HEK293 (cell line): ENCODE measurements at regions of chr6 and their contacts with region 1.

Region 1: GRCh38 chr6:30102970-30103874 is 9.7 kb downstream of the TRIM31 start:
- H3K4me3 ChIP-seq: peak overlapping the region; percentile 32
- H3K27ac ChIP-seq: no peak overlapping the region
- H3K4me1 ChIP-seq: peaks cover 12% of the 10 kb centered on the region
- CTCF ChIP-seq: peak; percentile 96

Region 2: GRCh38 chr6:29953001-29953441 is 150.2 kb before region 1 on chr6:
- CTCF ChIA-PET with region 1: no interaction called
- POLR2A ChIA-PET with region 1: no interaction called
- H3K4me3 ChIP-seq: no peak overlapping the region
- H3K27ac ChIP-seq: no peak overlapping the region
- H3K4me1 ChIP-seq: no peaks in the 10 kb centered on the region
- CTCF ChIP-seq: no peak

Region 3: DNA sequence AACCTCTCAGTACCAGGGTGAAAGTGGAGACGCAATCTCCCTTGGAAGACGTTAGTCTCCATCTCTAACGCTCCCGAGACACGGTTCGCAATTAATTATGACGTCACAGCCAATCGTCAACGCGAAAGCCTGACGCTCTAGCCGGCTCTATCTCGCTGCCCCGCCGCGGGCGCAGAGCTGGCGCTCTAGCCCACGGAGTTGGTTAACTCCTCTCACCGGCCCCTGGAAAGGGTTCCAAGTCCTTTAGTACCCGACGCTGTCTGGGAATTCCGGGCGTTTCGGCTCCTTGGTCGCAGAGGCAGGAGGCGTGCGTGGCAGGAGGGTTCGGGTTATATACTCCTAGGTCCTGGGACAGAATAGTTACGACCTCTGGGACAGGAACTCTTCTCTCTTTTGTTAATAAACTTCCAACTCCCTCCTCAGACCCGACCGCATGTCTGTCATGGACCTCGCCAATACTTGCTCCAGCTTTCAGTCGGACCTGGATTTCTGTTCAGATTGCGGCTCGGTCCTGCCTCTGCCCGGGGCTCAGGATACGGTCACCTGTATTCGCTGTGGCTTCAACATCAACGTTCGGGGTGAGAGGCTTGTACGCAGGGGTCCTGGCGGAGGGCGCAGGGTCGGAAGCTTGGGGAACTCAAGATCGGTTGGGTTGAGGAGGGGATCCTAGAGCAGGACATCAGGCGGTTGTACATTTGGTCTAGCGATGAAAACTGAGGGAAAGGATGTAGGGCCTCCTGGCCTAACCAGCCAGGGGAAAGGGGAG is 41.9 kb before region 1 on chr6 and contains the start of gene POLR1H:
- CTCF ChIA-PET with region 1: interaction called, 13 read pairs
- POLR2A ChIA-PET with region 1: interaction called, 36 read pairs
- H3K4me3 ChIP-seq: peak within 1 kb of the TSS; percentile 75
- H3K27ac ChIP-seq: peak within 1 kb of the TSS; percentile 72
- H3K4me1 ChIP-seq: peaks cover 7% of the 10 kb centered on the region
- CTCF ChIP-seq: no peak

Region 4: DNA sequence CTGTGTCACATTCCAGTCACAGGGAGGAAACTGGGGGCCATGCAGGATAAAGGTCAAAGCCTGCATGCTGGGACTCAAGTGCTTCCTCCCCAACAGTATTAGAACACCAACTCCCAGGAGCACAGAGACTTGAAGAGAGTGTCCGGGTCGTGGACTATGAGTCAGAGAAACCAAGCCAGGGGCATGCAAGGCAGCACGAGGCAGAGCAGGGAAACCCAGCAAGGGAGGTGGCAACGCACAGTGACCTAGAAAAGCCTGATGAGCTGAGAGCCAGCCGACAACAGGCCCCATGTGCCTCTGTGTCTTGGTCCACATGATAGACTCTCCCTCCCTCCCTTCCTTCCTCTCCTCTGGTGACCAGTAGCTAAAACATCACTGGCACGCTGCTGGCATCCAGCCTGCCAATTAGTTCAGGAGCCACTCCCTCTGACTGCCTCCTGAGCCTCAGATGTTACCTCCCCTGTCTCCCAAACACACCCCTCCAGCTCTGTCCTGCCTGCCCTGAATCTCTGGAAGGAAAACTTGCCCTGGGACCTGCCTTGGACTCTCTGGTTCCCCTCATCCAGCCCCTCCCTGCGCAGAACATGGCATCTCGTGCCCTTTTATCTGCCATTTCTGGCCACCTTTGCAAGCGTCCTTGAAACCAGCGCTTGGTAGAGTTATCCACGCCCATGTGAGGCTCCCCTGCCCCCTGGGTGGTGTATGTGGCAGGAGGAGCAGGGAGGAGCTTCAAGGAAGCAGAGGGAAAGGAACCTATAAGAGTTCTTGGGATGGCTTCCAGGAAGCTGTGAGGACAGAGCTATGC is 11.4 kb before region 1 on chr6:
- CTCF ChIA-PET with region 1: interaction called, 15 read pairs
- POLR2A ChIA-PET with region 1: interaction called, 8 read pairs
- H3K4me3 ChIP-seq: no peak overlapping the region
- H3K27ac ChIP-seq: no peak overlapping the region
- H3K4me1 ChIP-seq: peaks cover 4% of the 10 kb centered on the region
- CTCF ChIP-seq: no peak

Region 5: DNA sequence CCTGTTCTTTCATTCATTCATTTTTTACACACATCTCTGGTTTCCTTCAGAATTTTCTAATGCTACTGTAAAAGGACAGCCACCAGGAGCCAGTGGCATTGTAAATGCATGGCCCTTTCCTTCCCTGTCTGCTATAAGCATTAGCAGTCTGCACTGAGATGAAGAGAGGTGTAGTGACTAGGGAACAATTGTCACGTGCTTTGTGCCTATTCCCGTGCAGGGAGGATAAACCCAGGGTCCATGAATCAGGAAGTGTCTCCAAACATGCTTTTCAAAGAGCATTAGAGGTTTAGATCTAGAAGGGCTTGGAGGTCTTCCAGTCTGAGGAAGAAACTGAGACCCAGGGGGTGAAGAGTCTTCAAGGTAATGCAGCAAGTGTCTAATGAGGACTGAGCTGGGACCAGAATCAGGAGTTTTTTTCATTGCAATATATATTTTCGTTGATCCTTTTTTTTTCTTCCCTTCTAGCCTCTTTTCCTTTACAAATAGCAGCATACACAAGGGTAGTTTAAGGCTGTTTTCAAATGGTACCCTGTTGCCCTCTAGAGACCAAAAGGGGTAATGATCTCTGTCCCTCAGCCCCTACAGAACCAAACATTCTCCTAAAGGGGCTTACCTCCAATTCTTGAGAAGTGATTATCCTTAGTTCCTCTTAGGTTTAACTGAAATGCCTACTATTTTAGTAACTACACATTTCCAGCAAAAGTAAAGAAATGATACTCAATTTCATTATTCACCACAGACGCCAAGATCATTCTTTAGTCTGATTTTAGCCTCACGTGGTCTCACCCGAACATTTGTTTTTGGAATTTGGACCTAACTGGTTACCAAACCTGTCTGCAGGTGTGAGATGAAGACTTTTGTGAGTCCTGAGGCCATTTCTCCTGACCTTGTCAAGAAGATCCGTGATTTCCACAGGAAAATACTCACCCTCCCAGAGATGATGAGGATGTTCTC is 66.7 kb after region 1 on chr6:
- CTCF ChIA-PET with region 1: interaction called, 74 read pairs
- POLR2A ChIA-PET with region 1: interaction called, 5 read pairs
- H3K4me3 ChIP-seq: no peak overlapping the region
- H3K27ac ChIP-seq: no peak overlapping the region
- H3K4me1 ChIP-seq: no peaks in the 10 kb centered on the region
- CTCF ChIP-seq: peak; percentile 73

Region 6: DNA sequence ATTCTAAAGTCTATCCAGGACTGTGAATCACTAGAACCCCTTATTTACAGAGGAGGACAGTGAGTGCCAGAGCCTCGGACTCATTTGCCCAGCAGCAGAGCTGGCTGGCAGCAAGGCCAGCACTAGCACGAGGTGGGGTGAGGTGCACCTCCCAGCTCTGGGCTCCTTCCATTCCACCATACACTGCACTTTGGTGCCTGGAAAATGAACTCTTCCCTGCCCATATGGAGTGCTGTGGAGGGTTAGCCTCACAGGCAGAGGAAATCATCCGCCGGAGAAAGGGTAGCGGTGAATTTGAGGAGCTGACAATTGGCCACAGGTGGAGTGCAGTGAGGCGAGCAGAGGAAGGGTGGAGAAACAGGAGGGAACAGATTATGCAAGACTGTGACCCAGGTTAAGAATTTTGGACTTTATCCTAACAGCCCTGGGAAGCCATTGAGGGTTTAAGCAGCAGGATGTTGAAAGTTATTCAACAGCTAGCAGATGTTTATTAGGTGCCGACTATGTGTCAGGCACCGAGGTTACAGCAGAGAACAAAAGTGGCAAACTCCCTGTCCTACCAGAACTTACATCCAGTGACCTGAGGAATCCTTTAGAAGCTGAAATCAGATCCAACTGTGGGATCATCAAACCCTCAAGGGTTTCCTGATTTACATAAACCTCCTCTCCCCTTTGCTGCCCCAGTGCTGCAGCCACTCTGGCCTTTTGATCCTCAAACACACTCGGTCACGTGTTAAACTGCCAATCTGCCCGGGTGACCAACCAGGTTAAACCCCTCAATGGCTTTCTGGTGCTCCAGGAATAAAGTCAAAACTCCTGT is 103.8 kb after region 1 on chr6:
- CTCF ChIA-PET with region 1: interaction called, 12 read pairs
- POLR2A ChIA-PET with region 1: interaction called, 3 read pairs
- H3K4me3 ChIP-seq: no peak overlapping the region
- H3K27ac ChIP-seq: no peak overlapping the region
- H3K4me1 ChIP-seq: peaks cover 43% of the 10 kb centered on the region
- CTCF ChIP-seq: no peak

Region 7: DNA sequence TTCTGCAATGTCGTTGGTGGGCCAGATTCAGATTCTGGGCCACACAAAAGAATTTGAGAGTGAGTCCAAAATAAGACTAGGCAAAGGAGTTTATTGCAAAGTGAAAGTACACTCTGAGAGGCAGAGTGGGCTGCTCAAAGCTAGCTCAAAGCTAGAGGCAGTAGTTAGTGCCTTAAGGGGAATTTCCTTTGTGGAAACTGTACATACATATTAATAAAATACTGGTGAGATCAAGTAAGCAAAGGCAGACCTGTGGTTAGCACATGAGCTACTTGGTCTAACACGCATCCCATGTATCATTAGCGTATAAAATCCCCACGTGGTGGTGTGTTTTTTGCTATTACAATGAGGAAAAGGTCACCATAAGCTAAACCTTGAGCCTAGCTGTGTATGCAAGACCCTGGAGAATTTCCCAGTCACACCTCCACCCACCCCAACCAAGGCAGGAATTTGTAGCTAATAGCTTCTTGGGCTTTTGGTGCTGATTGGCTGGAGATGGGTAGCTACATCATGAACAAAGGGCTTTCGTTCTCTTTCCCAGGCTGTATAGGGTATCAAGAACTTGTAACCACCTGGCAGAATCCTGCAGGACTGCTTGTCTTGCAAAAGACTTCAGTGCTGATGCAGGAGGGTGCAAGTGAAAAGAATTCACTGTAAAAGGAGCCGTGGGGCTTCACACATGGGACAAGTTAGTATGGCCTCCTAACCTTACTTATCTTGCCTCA is 124.7 kb after region 1 on chr6:
- CTCF ChIA-PET with region 1: no interaction called
- POLR2A ChIA-PET with region 1: no interaction called
- H3K4me3 ChIP-seq: no peak overlapping the region
- H3K27ac ChIP-seq: no peak overlapping the region
- H3K4me1 ChIP-seq: peaks cover 7% of the 10 kb centered on the region
- CTCF ChIP-seq: no peak